Motor neuron (in vitro differentiated cells): ENCODE measurements at regions of chrX and their contacts with region 1.

Region 1: DNA sequence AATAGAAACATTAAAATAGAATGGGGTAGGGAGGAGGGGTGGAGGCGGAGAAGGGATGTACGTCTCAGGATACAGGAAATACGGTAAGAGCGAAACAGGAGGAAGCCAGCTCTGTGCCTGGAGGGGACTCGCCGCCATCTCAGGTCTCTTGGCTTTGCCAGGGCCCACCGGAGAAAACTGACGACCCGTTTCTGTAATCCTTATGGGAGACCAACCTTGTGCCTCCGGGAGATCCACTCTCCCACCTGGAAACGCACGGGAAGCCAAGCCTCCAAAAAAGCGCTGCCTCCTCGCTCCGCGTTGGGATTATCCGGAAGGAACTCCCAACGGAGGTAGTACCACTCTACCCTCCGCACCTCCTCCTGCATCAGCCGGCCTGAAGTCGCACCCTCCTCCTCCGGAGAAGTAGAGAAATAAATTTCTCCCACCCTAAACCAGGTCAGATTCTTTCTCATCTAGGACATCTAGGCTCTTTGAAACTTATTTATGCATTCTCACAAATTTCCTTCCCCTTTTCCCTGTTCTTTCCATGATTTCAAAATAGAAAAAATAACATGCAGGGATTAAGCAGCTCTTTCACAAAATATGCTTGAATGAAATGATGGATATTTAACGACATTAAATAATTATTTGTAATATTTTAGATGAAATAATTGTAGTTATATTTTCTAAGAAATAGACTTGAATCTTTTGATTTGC is at the start of gene NBDY:
- ATAC-seq: peak; percentile 87 to 93 (median 89)
- H3K4me3 ChIP-seq: peak within 1 kb of the TSS; percentile 62 to 97 (median 91)
- H3K27ac ChIP-seq: peak within 1 kb of the TSS; percentile 79 to 93
- H3K4me1 ChIP-seq: peaks cover 3 to 4% of the 10 kb centered on the region in 2 donors
- total RNA-seq, gene NBDY: 32.8 to 67.9 (median 48.5) TPM

Region 2: DNA sequence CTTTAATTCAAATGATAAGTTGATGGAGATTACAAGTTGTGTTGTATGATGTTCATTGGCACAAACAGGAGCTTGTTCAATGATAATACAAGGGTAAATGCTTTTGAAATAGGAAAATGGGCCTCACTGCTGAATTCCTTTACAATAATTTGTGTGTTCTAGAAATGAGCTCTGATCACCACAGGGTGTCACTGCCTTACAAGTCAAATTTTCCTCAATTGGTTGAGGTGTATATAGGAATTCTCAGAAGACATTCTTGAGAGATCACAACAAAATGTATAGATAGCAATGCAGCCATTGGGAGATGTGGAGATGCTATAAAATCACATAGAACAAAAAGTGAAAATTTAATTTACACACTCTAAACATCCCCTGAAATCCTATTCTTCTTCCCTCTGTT is 447.5 kb before region 1 on chrX:
- in situ Hi-C with region 1: loop called in 3 of 9 experiments (anchors 25 kb)
- ATAC-seq: peak in 1 of 8 experiments; percentile 62
- H3K4me3 ChIP-seq: no peak overlapping the region
- H3K27ac ChIP-seq: no peak overlapping the region
- H3K4me1 ChIP-seq: no peaks in the 10 kb centered on the region

Region 3: DNA sequence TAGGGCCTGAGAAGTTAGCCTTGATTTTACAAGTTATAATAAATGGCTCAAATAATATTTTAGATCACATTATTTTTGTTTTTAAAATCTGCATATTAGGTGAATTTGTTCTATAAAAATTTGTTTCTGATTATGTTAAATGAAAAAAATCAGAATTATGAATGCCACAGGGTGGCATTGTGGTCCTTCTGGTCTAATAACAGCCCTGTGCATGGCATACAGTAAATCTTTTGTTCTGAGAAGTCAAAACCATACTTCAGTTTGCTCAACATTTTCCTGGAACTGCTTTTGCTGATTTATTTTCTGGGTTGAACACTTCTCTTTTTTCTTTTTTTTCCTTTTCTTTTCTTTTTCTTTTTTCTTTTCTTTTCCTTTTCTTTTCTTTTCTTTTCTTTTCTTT is 266.9 kb before region 1 on chrX:
- in situ Hi-C with region 1: loop called in 1 of 9 experiments (anchors 25 kb)
- ATAC-seq: no peak
- H3K4me3 ChIP-seq: no peak overlapping the region
- H3K27ac ChIP-seq: no peak overlapping the region
- H3K4me1 ChIP-seq: no peaks in the 10 kb centered on the region

Region 4: GRCh38 chrX:56554870-56555269 is 174.4 kb before region 1 on chrX:
- in situ Hi-C with region 1: no loop called
- ATAC-seq: no peak
- H3K4me3 ChIP-seq: no peak overlapping the region
- H3K27ac ChIP-seq: no peak overlapping the region
- H3K4me1 ChIP-seq: no peaks in the 10 kb centered on the region

Region 5: GRCh38 chrX:56588397-56589188 is 140.7 kb before region 1 on chrX:
- in situ Hi-C with region 1: loop called in 1 of 9 experiments (anchors 25 kb)
- ATAC-seq: no peak
- H3K4me3 ChIP-seq: no peak overlapping the region
- H3K27ac ChIP-seq: no peak overlapping the region
- H3K4me1 ChIP-seq: no peaks in the 10 kb centered on the region